ENCODE measurements at regions of chr14 and their contacts with region 1.

Region 1: DNA sequence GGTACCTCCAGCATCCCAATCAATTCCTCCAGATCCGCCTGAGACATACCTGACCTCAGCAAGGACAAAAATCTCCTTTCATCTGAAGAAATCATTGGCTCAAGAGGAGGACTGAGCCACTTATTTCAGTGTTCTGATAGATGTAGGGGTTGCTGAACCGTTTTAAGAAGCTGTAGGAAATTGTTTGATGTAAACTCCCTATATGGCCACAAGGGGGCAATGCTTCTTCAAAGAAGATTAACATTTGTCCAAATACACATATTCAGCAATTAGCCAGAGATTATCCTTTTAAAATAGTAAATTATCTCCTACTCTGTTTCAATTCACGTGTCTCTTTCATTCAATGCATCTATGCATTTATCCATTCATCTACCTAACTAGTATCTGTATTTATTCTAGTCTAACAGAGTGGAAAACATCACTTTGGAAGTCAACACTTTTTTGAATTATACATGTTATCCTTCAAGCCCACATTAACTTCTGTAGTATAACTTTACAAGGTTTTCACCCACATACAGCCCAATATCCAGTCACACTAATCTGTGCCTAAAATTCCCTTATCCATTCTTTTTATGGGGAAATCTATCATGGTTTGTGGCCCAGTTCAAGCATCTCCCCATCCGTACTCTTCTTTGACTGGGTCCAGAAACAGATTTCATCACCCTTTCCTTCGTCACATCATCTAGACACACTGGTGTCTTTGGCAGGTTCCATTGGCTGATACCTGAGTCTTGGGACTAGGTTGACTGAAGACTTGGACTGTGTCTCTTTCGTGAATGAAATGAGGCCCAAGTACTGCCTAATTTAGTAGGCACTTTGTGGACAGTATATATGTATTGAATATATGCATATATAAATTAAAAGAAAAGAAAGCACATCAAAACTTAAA is 411.0 kb upstream of the OR4E1 start:
- DNase-seq: no peak
- H3K4me3 Mint-ChIP-seq: peak overlapping the region; percentile 53
- H3K27ac Mint-ChIP-seq: peak overlapping the region; percentile 18
- H3K4me1 Mint-ChIP-seq: peaks cover 20% of the 10 kb centered on the region
- H3K27me3 Mint-ChIP-seq: no peaks in the 10 kb centered on the region

Region 2: DNA sequence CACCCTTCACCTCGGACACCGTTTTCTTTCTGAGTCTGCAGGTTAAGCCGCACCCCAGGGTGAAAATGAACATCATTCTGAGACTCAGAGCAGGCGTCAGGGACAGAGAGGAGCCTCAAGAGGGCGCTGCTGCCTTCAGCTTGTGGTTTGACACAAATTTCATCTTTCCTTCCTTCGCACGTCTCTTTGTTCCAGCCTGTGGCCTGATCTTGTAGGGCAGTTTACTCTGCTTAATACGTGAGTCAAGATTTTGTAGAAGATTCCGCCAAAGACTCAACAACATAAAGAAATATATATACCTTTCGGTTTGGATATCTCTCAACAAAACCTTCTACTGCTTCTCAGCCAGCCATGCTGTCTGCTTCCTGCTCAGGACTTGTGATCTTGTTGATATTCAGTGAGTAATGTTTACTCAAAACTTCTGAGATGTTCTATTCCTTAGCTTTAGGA is 81.8 kb before region 1 on chr14:
- intact Hi-C with region 1: loop called (anchors 2 kb)
- DNase-seq: peak; percentile 63
- H3K4me3 Mint-ChIP-seq: peak overlapping the region; percentile 80
- H3K27ac Mint-ChIP-seq: peak overlapping the region; percentile 85
- H3K4me1 Mint-ChIP-seq: peaks cover 25% of the 10 kb centered on the region
- H3K27me3 Mint-ChIP-seq: no peaks in the 10 kb centered on the region

Region 3: DNA sequence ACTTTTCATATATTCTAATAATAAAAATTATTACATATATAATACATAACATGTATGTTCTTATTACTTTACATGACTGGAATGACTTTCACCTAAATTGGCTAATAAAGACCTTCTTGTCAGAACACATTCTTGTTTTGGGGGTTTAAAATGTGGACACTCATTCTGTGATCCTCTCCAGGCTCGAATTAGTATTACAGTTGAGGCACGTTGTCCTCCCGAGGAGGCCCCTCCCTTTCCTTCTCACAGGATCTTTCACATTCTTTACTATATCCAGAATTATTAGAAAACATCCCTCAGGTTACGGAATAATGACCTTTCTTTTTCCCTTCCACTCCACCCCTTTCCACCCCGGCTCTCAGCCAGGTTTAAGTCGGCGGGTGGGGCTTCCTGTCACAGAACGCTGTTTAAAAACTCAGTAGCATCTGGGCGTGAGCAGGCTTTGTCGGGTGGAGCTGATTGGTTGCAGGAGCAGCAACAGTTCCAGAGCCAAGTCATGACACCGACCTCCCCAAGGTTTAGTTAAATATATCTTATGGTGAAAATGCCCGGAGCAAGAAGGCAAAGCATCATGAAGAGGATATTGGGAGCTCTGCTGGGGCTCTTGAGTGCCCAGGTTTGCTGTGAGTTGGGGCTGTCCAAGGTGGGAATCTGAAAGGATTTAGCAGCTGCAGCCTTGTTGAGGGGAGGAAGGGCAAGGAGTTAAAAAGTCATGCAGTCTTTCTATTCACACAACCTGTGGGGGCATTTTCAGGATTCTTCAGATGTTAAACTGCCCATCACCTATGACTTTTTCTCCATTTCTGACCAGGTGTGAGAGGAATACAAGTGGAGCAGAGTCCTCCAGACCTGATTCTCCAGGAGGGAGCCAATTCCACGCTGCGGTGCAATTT is 14.3 kb before region 1 on chr14:
- intact Hi-C with region 1: loop called (anchors 2 kb)
- DNase-seq: peak; percentile 41
- H3K4me3 Mint-ChIP-seq: peak overlapping the region; percentile 90
- H3K27ac Mint-ChIP-seq: peak overlapping the region; percentile 90
- H3K4me1 Mint-ChIP-seq: peaks cover 52% of the 10 kb centered on the region
- H3K27me3 Mint-ChIP-seq: no peaks in the 10 kb centered on the region

Region 4: GRCh38 chr14:22099942-22100763 is 15.5 kb after region 1 on chr14:
- intact Hi-C with region 1: loop called (anchors 1 kb)
- DNase-seq: peak; percentile 39
- H3K4me3 Mint-ChIP-seq: no peak overlapping the region
- H3K27ac Mint-ChIP-seq: peak overlapping the region; percentile 12
- H3K4me1 Mint-ChIP-seq: peaks cover 53% of the 10 kb centered on the region
- H3K27me3 Mint-ChIP-seq: no peaks in the 10 kb centered on the region